Cardiac septum (tissue), 1 donor: ENCODE measurements at regions of chr7 and their contacts with region 1.

Region 1: DNA sequence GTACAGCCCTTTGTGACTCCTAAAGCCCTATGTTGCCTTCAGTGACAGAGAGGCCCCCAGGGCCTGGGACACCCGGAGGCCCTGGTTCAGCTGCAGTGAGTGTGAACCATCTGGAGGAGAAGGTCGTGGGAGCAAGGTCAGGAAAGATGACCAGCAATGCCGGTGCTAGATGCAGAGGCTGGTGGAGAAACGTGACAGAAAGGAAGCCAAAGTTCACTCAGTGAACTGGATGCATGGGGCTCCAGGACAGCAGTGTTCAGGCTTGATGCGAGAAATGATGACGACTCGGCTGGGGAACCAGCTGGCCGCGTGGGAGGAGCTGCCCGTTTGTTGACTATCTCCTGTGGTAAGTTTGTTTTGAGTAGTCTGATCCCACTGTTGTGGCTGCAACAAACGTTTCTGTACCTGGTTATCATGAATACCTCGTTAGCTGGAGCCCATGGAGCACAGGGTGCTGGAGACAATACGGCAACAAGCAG is 54.1 kb upstream of the MKRN1 start:
- DNase-seq: no peak

Region 2: DNA sequence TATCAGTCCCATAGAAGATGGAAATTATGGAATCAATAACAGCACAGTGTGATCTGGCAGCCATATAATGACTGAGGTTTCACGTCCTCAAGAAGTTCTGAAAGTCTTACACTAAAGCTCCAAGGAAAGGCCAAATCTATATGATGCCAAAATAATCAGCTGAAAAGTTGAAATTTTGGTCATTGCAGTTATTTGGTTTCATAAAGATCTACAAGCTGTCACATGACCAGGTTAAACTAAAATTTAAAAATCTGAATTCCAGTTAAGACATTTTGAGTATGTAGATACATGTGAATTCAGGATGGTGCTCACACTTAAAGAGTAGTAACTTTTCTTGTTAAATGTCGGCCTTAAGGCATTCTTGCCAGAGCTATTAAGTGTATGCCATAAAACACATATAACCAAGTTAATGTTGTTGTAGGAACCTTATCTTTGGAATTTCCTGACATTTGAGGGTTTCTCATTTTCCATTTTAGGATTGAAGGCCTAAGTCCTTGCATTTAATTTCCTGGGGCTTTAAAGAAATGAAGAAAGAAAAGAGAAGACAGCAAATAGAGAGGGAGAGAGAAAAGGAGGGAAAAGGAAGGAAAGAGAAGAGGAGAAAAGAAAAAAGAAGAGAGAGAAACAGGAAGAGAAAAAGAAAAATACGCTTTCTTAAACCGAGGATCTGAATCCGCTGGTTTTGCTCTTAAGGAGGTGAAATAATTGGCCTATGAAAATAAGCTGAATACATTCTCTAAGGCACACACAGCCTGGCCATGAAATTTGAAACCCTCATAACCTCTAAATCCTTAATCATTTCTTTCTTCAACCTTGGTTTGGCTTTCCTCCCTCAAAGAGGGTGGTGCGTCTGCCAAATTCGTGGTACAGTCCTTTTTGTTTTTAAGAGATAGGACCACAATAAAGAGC is 63.3 kb after region 1 on chr7:
- intact Hi-C with region 1: loop called (anchors 10 kb)
- DNase-seq: no peak